CD4-positive, alpha-beta memory T cell (primary cell): ENCODE measurements at regions of chr1 and their contacts with region 1.

Region 1: GRCh38 chr1:174982971-174983689 is 16.6 kb upstream of the CACYBP start:
- DNase-seq: peak; percentile 59 to 70 (median 62)
- H3K4me3 ChIP-seq: no peak overlapping the region
- H3K4me3 Mint-ChIP-seq: no peak overlapping the region
- H3K27ac ChIP-seq: no peak overlapping the region
- H3K27ac Mint-ChIP-seq: peak overlapping the region in 5 of 7 donors; percentile 44 to 75 (median 59)
- H3K4me1 ChIP-seq: peaks cover 4% of the 10 kb centered on the region
- H3K4me1 Mint-ChIP-seq: peaks cover 13 to 28% (median 21%) of the 10 kb centered on the region in 4 donors
- H3K27me3 ChIP-seq: no peaks in the 10 kb centered on the region
- H3K27me3 Mint-ChIP-seq: no peaks in the 10 kb centered on the region

Region 2: GRCh38 chr1:174639461-174639860 is 343.7 kb before region 1 on chr1:
- CTCF ChIA-PET with region 1: no interaction called
- POLR2A ChIA-PET with region 1: no interaction called
- intact Hi-C with region 1: no loop called
- DNase-seq: no peak
- H3K4me3 ChIP-seq: no peak overlapping the region
- H3K4me3 Mint-ChIP-seq: no peak overlapping the region
- H3K27ac ChIP-seq: no peak overlapping the region
- H3K27ac Mint-ChIP-seq: peak overlapping the region in 2 of 7 donors; percentile 21 to 46
- H3K4me1 ChIP-seq: no peaks in the 10 kb centered on the region
- H3K4me1 Mint-ChIP-seq: peaks cover 0 to 9% (median 2%) of the 10 kb centered on the region in 4 donors
- H3K27me3 ChIP-seq: no peaks in the 10 kb centered on the region
- H3K27me3 Mint-ChIP-seq: no peaks in the 10 kb centered on the region

Region 3: GRCh38 chr1:174769961-174770549 is 213.1 kb before region 1 on chr1:
- CTCF ChIA-PET with region 1: interaction called, 11 read pairs
- POLR2A ChIA-PET with region 1: interaction called, 4 read pairs
- intact Hi-C with region 1: loop called (anchors 1 kb)
- DNase-seq: peak; percentile 34 to 55 (median 44)
- H3K4me3 ChIP-seq: no peak overlapping the region
- H3K4me3 Mint-ChIP-seq: no peak overlapping the region
- H3K27ac ChIP-seq: no peak overlapping the region
- H3K27ac Mint-ChIP-seq: no peak overlapping the region
- H3K4me1 ChIP-seq: no peaks in the 10 kb centered on the region
- H3K4me1 Mint-ChIP-seq: peaks cover 0 to 5% (median 2%) of the 10 kb centered on the region in 4 donors
- H3K27me3 ChIP-seq: no peaks in the 10 kb centered on the region
- H3K27me3 Mint-ChIP-seq: no peaks in the 10 kb centered on the region